Endothelial cell of umbilical vein (primary cell): ENCODE measurements at regions of chr17 and their contacts with region 1.

Region 1: DNA sequence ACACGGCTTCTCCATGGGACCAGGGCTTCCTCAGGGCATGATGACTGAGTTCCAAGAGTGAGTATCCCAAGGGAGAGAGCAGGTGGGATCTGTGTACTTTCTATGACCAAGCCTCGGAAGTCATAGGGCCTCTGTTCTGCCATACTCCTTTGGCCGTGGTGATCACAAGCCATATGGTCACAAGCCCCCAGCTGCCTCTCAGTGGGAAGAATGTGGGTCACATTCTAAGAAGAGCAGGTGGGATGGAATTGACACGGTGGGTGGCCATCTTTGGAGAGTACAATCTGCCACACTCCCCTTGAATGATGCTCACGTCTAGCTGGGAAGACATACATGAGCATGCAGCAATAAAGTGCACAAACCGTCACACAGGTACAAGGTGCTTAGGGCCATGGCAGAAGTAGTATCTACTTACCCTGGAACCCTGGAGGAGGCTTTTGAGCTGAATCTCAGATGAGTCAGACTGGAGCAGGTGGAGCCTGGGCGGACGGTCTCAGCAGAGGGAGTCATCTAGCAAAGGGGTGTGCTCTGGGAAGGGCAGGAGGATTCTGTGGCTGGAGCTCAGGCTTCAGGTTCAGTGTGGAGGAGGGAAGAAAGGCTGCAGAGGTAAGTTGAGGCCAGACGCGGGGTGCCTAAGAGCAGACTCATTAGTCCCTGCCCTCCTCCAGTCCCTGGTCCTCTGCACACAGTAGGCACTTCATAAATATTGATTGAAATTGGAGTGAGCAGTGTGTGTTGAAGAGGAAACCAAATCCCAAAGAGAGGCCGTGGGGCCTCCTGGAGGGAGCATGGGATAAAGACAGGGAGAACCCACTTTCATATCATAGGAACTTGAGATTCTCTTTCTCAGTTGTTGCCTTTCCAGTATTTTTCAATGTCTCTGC is 26.6 kb downstream of the GOSR2 start:
- DNase-seq: no peak
- H3K4me3 ChIP-seq: no peak overlapping the region
- H3K27ac ChIP-seq: no peak overlapping the region
- H3K4me1 ChIP-seq: no peaks in the 10 kb centered on the region
- H3K27me3 ChIP-seq: peaks cover 0 to 5% of the 10 kb centered on the region in 2 experiments
- CTCF ChIP-seq: no peak
- POLR2A ChIP-seq: no peak

Region 2: GRCh38 chr17:46995841-46996571 is 46.5 kb after region 1 on chr17:
- CTCF ChIA-PET with region 1: interaction called, 80 read pairs
- POLR2A ChIA-PET with region 1: no interaction called
- dilution Hi-C with region 1: no loop called
- intact Hi-C with region 1: loop called (anchors 2 kb)
- DNase-seq: peak; percentile 65
- H3K4me3 ChIP-seq: no peak overlapping the region
- H3K27ac ChIP-seq: peak overlapping the region; percentile 9
- H3K4me1 ChIP-seq: peaks cover 8% of the 10 kb centered on the region
- H3K27me3 ChIP-seq: no peaks in the 10 kb centered on the region
- CTCF ChIP-seq: no peak
- POLR2A ChIP-seq: no peak

Region 3: GRCh38 chr17:47907932-47908562 is 958.5 kb after region 1 on chr17:
- CTCF ChIA-PET with region 1: no interaction called
- POLR2A ChIA-PET with region 1: no interaction called
- dilution Hi-C with region 1: no loop called
- intact Hi-C with region 1: no loop called
- DNase-seq: no peak
- H3K4me3 ChIP-seq: no peak overlapping the region
- H3K27ac ChIP-seq: no peak overlapping the region
- H3K4me1 ChIP-seq: no peaks in the 10 kb centered on the region
- H3K27me3 ChIP-seq: no peaks in the 10 kb centered on the region
- CTCF ChIP-seq: no peak
- POLR2A ChIP-seq: no peak